ENCODE measurements at regions of chr16 and their contacts with region 1.

Region 1: GRCh38 chr16:88437373-88437964 is 15.6 kb upstream of the ZFPM1 start:
- DNase-seq: peak; percentile 48 to 68 (median 59)
- ATAC-seq: peak; percentile 36
- H3K4me3 ChIP-seq: no peak overlapping the region
- H3K27ac ChIP-seq: no peak overlapping the region
- H3K4me1 ChIP-seq: peaks cover 8% of the 10 kb centered on the region
- H3K27me3 ChIP-seq: no peaks in the 10 kb centered on the region
- CTCF ChIP-seq: peak; percentile 77 to 93 (median 82)
- POLR2A ChIP-seq: no peak

Region 2: GRCh38 chr16:88194397-88195268 is 242.8 kb before region 1 on chr16:
- intact Hi-C with region 1: loop called (anchors 5 kb)
- DNase-seq: peak in 3 of 4 donors; percentile 13 to 53 (median 42)
- ATAC-seq: peak; percentile 53
- H3K4me3 ChIP-seq: no peak overlapping the region
- H3K27ac ChIP-seq: peak overlapping the region in 3 of 4 donors; percentile 10 to 26 (median 15)
- H3K4me1 ChIP-seq: no peaks in the 10 kb centered on the region
- H3K27me3 ChIP-seq: no peaks in the 10 kb centered on the region
- CTCF ChIP-seq: no peak
- POLR2A ChIP-seq: no peak

Measured in body of pancreas (tissue), 4 donors.